ENCODE measurements at regions of chr19 and their contacts with region 1.

Region 1: DNA sequence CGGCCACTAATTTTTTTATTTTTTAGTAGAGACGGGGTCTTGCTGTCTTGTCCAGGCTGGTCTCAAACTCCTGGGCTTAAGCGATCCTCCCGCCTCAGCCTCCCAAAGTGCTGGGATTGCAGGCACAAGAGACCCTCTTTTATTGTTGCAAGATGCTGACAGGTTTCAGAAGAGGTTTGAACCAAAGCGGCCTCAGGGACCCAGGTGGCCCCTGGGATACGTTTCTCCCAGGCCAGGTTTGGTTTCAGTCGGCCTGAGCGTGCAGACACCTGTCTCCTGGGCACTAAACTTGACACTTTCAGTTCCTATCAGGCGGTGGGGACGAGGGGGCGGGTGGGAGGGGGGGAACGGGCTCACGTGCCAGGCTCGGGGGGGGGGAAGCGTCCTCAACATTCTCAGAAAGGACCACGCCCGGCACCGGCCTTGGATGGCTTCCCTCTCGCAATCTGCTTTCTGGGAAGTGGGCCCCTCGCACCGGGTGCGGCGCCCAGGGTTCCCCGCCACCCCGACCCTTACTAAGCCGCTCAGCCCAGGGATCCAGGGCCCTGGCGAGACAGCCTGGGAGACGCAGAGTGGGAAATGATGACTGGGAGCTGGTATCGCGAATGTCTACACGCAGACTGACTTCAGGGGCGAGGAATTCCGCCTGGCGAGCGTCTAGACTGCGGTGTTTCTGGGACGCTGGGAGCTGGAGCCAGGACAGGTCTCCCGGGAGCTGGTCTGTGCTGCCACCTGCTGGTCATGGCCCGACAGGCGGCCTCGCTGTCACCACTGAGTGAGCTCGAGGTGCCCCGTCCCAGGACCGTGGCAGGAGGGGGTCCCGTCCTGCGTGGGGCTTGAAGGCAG is 91.6 kb downstream of the GNG7 start:
- DNase-seq: peak; percentile 91 to 100 (median 96)
- ATAC-seq: peak; percentile 91 to 95 (median 94)
- H3K4me3 ChIP-seq: peak overlapping the region in 3 of 4 donors; percentile 14 to 34 (median 33)
- H3K27ac ChIP-seq: peak overlapping the region; percentile 58 to 92 (median 86)
- H3K4me1 ChIP-seq: peaks cover 0 to 7% (median 4%) of the 10 kb centered on the region in 3 donors
- H3K27me3 ChIP-seq: no peaks in the 10 kb centered on the region
- CTCF ChIP-seq: peak; percentile 94 to 96 (median 96)

Region 2: DNA sequence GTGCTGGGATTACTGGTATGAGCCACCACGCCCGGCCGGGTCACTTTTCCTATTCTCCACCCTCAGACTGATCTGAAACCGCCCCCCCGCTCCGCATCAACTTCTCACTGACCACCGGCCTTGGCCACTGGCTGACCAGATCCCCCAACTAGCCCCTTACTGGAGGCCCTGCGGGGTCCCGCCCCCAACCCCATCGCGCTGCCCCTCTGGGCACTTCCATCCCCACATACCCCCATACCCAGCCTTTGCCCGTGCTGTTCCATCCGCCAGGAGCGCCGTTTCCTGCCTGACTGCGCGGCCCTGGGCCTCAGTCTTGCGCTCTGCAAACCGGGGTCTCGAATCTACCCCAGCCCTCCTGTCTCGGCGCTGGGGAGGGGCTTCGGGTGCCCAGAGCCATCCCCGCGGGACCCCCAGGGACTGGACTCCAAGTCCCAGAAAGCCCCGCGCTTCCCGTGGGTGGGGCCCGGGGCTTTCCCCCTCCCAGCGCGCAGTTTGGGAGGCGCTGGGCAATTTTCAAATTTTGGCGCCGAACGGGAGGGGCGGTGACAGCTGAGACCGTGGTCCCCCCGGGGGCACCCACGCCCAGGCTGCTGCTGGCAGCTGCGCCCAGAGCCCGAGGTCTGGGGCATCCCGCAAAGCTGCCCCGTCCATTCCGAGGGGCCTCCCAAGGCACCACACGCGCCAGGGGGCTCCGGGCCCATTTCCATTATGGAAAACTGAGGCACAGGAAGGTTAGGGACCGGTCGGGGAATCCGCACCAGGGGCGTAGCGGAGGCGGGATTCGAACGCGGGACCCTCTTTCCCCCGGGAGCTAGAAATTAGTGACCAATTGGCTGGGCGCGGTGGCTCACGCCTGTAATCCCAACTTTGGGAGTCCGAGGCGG is 148.9 kb before region 1 on chr19:
- intact Hi-C with region 1: loop called in 1 of 3 experiments (anchors 10 kb)
- DNase-seq: peak in 4 of 6 donors; percentile 60 to 75 (median 68)
- ATAC-seq: peak; percentile 42 to 68 (median 58)
- H3K4me3 ChIP-seq: peak overlapping the region; percentile 20 to 68 (median 50)
- H3K27ac ChIP-seq: no peak overlapping the region
- H3K4me1 ChIP-seq: no peaks in the 10 kb centered on the region
- H3K27me3 ChIP-seq: no peaks in the 10 kb centered on the region
- CTCF ChIP-seq: no peak

Region 3: GRCh38 chr19:2540646-2541454 is 70.0 kb before region 1 on chr19:
- intact Hi-C with region 1: no loop called
- DNase-seq: peak; percentile 67 to 92 (median 82)
- ATAC-seq: peak; percentile 44 to 69 (median 56)
- H3K4me3 ChIP-seq: no peak overlapping the region
- H3K27ac ChIP-seq: peak overlapping the region; percentile 58 to 75 (median 74)
- H3K4me1 ChIP-seq: peaks cover 16 to 30% (median 20%) of the 10 kb centered on the region in 3 donors
- H3K27me3 ChIP-seq: no peaks in the 10 kb centered on the region
- CTCF ChIP-seq: no peak